GM12878 (cell line): ENCODE measurements at regions of chr17 and their contacts with region 1.

Region 1: GRCh38 chr17:8997994-8998628 is 23.2 kb upstream of the NTN1 start:
- DNase-seq: peak; percentile 40
- ATAC-seq: peak; percentile 86
- H3K4me3 ChIP-seq: no peak overlapping the region
- H3K27ac ChIP-seq: no peak overlapping the region
- H3K4me1 ChIP-seq: peaks cover 21% of the 10 kb centered on the region
- H3K27me3 ChIP-seq: peaks cover 4 to 5% of the 10 kb centered on the region in 2 experiments; a peak in 3 of 4 replicates
- CTCF ChIP-seq: peak; percentile 96 to 99 (median 96); a peak in 5 of 6 replicates
- EP300 ChIP-seq: no peak
- POLR2A ChIP-seq: no peak
- RAD21 ChIP-seq: peak; percentile 100

Region 2: DNA sequence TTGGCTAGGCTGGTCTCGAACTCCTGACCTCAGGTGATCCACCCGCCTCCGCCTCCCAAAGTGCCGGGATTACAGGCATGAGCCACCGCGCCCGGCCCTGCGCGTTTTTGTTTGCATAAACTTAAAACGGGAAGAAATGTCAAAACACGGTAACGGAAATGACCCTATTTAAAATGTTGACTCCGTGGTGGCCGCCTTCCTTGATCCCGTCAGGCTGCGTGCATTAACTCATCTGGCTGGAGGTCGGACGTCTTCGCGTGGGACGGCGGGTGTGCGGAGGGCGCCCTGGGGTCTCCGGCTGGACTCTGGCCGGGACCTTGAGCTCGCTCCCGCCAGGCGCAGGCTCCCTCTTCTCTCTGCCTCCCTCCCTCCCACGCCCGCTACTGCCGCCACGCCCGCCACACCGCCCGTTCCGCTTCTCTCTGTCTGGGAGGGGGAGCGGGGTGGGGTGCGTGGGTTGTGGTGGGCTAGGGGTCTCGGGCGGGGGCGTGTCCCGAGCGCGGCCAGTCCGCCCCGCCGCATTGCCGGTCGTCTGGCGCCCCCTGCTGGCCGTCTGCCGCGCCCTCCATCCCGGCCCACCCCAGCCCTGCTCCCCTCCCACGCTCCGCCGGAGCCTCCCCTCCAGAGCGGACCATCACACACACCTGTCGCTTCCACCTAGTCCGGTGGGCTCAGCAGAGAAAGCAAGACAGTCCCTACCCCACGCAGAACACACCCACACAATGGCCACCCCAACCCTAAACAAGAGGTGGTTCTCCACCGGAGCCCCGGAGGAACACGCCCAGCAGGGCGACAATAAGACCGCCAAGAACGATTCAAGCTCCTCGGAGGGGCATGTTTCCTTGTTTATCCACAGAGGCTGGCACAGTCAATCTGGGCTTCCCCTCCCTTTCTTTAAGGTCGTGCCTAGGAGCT is 252.3 kb before region 1 on chr17:
- CTCF ChIA-PET with region 1: interaction called, 26 read pairs
- POLR2A ChIA-PET with region 1: no interaction called
- RAD21 ChIA-PET with region 1: interaction called, 9 read pairs
- SMC1A ChIA-PET with region 1: interaction called, 10 read pairs
- in situ Hi-C with region 1: no loop called
- intact Hi-C with region 1: no loop called
- DNase-seq: peak; percentile 4
- ATAC-seq: peak; percentile 95
- H3K4me3 ChIP-seq: peak overlapping the region; percentile 85
- H3K27ac ChIP-seq: peak overlapping the region; percentile 30; the same call in 1 of the 2 replicates
- H3K4me1 ChIP-seq: peaks cover 5% of the 10 kb centered on the region
- H3K27me3 ChIP-seq: no peaks in the 10 kb centered on the region; a peak in 1 of 4 replicates
- CTCF ChIP-seq: peak; percentile 71 to 88 (median 82)
- EP300 ChIP-seq: no peak
- POLR2A ChIP-seq: no peak; the same call in none of the 2 replicates
- RAD21 ChIP-seq: peak; percentile 70

Region 3: DNA sequence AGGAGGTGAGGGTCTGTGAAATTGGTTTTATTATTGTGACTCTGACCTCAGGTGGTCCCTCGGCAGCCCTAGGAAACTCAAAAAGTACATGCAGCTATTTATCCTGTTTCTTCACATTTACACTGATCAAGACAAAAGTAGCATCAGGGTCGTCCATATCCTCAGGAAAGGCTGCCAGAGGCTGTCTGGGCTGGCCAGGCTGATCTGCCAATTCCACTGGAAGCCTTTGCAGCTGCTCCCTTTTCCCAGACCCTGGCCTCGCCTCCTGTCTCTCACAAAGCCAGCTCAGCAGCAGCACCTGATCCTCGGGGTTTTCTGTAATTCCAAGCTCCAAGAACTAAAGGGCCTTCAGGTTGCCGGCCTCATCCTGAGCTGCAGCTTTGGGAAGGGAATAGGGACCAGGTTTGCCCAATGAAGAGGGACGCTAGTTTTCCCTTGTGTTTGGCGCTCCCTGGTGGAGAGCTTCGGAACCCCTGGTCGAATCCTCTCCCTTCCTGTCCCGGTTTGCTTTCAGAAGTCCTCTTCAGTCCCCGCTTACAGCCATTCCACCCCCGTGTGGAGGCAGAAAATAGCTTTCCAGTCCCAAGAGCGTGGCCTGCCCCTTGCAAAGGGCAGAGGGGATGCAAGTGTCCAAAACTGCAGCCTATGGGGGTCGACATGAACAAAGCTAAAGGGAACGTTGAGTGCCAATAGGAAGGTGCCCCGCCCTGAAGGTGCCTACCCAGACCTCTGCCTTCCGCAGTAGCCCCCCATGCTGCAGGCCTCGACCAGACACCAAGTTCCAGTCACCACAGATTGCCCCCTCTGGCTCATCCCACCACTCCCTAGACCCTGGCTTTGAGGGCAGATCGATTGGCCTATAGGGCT is 212.3 kb before region 1 on chr17:
- CTCF ChIA-PET with region 1: interaction called, 12 read pairs
- POLR2A ChIA-PET with region 1: no interaction called
- RAD21 ChIA-PET with region 1: interaction called, 5 read pairs
- SMC1A ChIA-PET with region 1: interaction called, 6 read pairs
- in situ Hi-C with region 1: no loop called
- intact Hi-C with region 1: no loop called
- DNase-seq: no peak
- ATAC-seq: peak; percentile 89
- H3K4me3 ChIP-seq: no peak overlapping the region
- H3K27ac ChIP-seq: no peak overlapping the region
- H3K4me1 ChIP-seq: no peaks in the 10 kb centered on the region
- H3K27me3 ChIP-seq: no peaks in the 10 kb centered on the region
- CTCF ChIP-seq: peak; percentile 64 to 87 (median 84)
- EP300 ChIP-seq: no peak
- POLR2A ChIP-seq: no peak
- RAD21 ChIP-seq: peak; percentile 75

Region 4: DNA sequence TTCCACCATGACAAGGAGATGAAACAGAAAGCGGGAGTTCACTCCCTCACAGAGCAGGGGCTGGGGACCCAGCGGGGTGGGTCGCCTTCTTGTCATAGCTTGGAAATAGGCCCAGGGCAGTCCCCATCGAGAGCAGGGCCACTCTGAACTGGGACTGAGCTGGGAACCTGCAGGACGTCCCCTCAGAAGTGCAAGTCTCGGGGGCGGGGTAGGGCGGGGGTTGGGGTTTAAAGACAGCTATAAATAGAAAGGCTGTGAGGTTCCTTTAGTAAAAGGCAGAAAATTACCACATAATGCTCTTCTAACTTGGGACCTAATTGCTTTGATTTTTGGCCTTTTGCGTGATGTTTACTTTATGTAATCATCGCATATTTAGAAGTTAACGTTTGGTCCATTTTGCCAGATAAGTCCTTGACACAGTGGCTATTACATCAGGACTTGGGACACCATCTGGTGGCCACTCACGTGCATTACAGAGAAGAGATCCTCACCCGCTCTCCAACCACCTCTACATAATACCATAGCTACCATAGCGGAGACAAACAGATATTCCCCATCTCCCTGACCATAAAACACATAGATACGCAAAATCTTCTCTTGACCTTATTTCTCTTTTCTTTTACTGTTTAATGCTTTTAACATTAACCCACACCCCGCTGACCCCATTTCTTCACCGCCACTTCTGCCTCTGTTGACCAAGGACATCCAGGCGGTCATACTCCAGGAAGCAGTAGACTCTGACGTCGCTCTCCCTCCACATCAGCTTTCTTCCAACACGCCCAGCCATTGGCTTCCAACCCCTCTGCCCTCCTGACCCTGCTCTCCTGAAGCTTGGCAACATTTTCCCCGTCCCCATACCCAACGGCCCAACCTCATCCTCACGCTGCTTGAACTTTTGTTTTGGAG is 103.2 kb before region 1 on chr17:
- CTCF ChIA-PET with region 1: interaction called, 162 read pairs
- POLR2A ChIA-PET with region 1: interaction called, 4 read pairs
- RAD21 ChIA-PET with region 1: interaction called, 52 read pairs
- SMC1A ChIA-PET with region 1: interaction called, 37 read pairs
- in situ Hi-C with region 1: no loop called
- intact Hi-C with region 1: loop called (anchors 1 kb)
- DNase-seq: peak; percentile 65
- ATAC-seq: peak; percentile 66
- H3K4me3 ChIP-seq: peak overlapping the region; percentile 14; the same call in 1 of the 2 replicates
- H3K27ac ChIP-seq: peak overlapping the region; percentile 98
- H3K4me1 ChIP-seq: peaks cover 71% of the 10 kb centered on the region
- H3K27me3 ChIP-seq: no peaks in the 10 kb centered on the region
- CTCF ChIP-seq: peak; percentile 74 to 90 (median 83)
- EP300 ChIP-seq: no peak
- POLR2A ChIP-seq: no peak; the same call in none of the 2 replicates
- RAD21 ChIP-seq: peak; percentile 84

Region 5: GRCh38 chr17:8922451-8922850 is 75.7 kb before region 1 on chr17:
- CTCF ChIA-PET with region 1: interaction called, 6 read pairs
- POLR2A ChIA-PET with region 1: no interaction called
- RAD21 ChIA-PET with region 1: interaction called, 6 read pairs
- SMC1A ChIA-PET with region 1: interaction called, 19 read pairs
- in situ Hi-C with region 1: no loop called
- intact Hi-C with region 1: no loop called
- DNase-seq: no peak
- ATAC-seq: no peak
- H3K4me3 ChIP-seq: no peak overlapping the region
- H3K27ac ChIP-seq: no peak overlapping the region
- H3K4me1 ChIP-seq: peaks cover 50% of the 10 kb centered on the region
- H3K27me3 ChIP-seq: no peaks in the 10 kb centered on the region
- CTCF ChIP-seq: no peak
- EP300 ChIP-seq: no peak
- POLR2A ChIP-seq: no peak
- RAD21 ChIP-seq: no peak

Region 6: DNA sequence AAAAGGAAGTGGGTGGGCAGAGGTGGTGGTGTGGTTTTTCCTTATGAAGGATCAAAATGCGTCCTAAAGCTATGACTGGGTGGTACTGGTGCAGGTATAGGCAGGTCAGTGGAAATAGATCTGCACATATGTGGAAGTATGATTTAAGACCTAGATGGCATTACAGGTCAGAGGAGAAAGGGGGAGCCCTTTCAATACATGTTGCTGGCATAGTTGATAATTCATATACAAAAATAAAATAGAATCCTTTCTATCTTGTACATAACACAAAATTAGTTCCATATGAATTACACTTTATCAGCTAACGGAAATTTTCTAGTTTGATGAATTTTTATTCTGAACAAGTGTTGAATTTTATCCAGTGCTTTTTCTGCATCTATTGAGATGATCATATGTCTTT is 11.8 kb before region 1 on chr17:
- CTCF ChIA-PET with region 1: interaction called, 43 read pairs
- POLR2A ChIA-PET with region 1: interaction called, 5 read pairs
- RAD21 ChIA-PET with region 1: interaction called, 4 read pairs
- SMC1A ChIA-PET with region 1: interaction called, 24 read pairs
- in situ Hi-C with region 1: no loop called
- intact Hi-C with region 1: no loop called
- DNase-seq: no peak
- ATAC-seq: peak; percentile 37; the same call in 2 of the 3 replicates
- H3K4me3 ChIP-seq: no peak overlapping the region
- H3K27ac ChIP-seq: peak overlapping the region; percentile 65; the same call in 1 of the 2 replicates
- H3K4me1 ChIP-seq: peaks cover 18% of the 10 kb centered on the region
- H3K27me3 ChIP-seq: no peaks in the 10 kb centered on the region
- CTCF ChIP-seq: peak in 2 of 3 experiments; percentile 15 to 17; a peak in 1 of 6 replicates
- EP300 ChIP-seq: no peak
- POLR2A ChIP-seq: no peak
- RAD21 ChIP-seq: no peak

Region 7: DNA sequence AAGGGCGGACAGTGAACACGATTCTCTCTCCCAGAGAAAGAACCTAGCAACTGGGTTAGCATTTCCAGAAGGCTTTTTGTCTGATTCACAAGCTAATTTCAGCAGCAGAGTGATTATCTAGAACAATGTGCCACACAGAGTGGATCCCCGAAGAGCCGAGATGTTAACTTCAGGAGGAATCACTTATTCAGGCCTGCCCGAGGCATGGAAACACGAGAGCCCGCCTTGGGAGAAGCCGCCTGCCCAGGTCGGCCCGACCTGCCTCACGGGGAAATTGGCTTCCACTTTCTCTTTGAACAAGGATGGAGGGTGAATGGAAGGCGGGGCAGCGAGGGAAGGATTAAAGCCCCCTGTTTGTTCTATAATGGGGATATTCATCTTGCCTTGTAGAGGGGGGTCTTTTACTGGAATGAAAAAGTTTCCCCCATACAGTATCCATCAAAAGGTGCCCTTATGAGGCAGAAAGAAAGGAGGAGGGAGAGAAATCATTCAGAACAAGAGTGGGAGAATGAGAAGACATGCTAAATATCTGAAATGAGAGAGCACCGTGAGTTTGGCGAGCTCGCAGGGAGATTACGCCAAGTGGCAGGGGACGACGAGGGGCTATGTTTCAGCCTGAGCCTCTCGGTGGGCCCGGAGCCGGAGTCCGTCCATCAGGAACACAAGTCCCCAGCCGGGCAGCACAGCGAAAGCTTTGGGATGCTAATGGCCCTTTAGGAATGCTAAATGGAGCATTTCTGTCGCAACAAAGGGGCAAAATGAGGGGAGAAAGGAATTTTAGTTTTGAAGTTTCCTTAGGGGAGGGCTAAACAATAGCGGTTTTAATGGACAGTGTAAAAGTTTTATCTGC is 56.2 kb after region 1 on chr17:
- CTCF ChIA-PET with region 1: no interaction called
- POLR2A ChIA-PET with region 1: no interaction called
- RAD21 ChIA-PET with region 1: no interaction called
- SMC1A ChIA-PET with region 1: no interaction called
- in situ Hi-C with region 1: no loop called
- intact Hi-C with region 1: no loop called
- DNase-seq: no peak
- ATAC-seq: no peak
- H3K4me3 ChIP-seq: no peak overlapping the region
- H3K27ac ChIP-seq: no peak overlapping the region
- H3K4me1 ChIP-seq: no peaks in the 10 kb centered on the region
- H3K27me3 ChIP-seq: no peaks in the 10 kb centered on the region; a peak in 1 of 4 replicates
- CTCF ChIP-seq: no peak
- EP300 ChIP-seq: no peak
- POLR2A ChIP-seq: no peak
- RAD21 ChIP-seq: no peak